AG04449 (cell line): ENCODE measurements at regions of chr1 and their contacts with region 1.

Region 1: DNA sequence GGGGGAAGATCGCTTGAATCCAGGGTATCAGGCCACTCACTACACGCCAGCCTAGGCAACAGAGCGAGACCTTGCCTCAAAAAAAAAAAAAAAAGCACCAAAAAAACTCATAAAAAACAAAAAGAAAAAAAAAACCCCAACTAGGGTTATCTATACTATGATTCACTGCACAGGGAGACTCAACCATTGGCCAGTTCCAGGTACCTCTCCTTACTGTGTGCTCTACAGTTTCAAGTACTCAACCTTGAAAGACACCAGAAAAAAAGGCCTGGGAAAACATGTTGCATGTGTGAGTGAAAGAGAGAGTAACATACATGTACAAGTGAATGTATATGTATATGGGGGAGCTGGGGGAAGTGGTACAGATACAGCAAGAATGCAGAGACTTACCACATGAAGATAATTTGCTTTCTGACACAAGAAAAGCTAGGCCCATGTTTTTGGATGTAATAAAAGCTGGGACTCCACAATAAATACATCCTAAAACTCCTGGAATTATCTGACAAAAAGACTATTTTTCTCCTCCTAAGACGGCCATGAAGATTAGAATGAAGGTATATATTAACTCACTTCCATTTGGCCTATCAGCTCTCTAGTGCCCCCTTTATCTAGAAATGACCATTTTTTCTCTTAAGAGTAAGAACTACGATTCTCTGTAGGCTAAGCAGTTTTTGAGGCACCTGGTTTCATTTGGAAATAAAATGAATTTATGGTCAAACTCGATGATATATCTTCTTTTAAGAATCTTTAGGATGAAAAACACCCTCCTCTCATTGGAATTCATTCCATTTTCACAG is 52.2 kb downstream of the SLC27A3 start:
- DNase-seq: no peak
- H3K4me3 ChIP-seq: no peak overlapping the region
- CTCF ChIP-seq: no peak

Region 2: GRCh38 chr1:153805042-153805745 is 22.2 kb before region 1 on chr1:
- CTCF ChIA-PET with region 1: interaction called, 14 read pairs
- POLR2A ChIA-PET with region 1: no interaction called
- DNase-seq: no peak
- H3K4me3 ChIP-seq: no peak overlapping the region
- CTCF ChIP-seq: no peak